HEK293 (cell line): ENCODE measurements at regions of chr16 and their contacts with region 1.

Region 1: DNA sequence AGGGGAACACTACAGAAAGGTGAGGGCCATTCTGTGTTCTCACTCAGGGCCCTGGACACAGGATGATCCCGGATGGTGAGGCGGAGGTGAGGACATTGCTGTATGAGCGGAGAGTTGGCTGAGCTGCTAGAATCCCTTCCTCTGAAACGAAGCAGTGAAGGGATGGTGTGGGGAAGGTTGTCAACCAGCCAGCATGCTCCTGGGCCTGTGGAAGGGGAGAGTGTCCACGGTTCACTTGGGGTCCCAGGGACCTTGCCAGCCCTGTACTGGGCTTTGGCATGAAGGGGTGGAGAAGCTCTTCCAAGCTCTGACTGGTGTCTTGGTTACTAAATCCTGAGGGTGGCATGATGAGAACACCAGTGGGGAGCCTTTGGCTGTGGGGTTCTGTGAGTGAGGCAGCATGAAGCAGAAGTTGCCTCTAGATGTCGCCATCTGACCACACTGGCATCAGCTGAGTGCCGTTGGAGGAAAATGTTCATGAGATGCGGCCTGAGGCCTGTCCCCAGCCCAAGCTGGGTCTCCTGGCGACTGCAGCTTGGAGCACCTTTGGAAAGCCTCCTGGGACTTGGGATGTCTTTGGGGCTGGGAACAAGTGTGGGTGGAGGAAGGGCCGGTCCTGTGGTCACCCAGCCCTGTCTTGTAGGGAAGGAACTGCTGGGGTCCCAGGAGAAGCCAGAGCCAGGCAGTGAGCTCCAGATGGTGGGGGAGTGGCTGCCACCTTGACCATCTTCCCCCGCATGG is 14.8 kb downstream of the PDP2 start:
- H3K4me3 ChIP-seq: no peak overlapping the region
- H3K27ac ChIP-seq: no peak overlapping the region
- H3K4me1 ChIP-seq: peaks cover 6% of the 10 kb centered on the region; the same call in 1 of the 2 replicates
- CTCF ChIP-seq: peak; percentile 97

Region 2: DNA sequence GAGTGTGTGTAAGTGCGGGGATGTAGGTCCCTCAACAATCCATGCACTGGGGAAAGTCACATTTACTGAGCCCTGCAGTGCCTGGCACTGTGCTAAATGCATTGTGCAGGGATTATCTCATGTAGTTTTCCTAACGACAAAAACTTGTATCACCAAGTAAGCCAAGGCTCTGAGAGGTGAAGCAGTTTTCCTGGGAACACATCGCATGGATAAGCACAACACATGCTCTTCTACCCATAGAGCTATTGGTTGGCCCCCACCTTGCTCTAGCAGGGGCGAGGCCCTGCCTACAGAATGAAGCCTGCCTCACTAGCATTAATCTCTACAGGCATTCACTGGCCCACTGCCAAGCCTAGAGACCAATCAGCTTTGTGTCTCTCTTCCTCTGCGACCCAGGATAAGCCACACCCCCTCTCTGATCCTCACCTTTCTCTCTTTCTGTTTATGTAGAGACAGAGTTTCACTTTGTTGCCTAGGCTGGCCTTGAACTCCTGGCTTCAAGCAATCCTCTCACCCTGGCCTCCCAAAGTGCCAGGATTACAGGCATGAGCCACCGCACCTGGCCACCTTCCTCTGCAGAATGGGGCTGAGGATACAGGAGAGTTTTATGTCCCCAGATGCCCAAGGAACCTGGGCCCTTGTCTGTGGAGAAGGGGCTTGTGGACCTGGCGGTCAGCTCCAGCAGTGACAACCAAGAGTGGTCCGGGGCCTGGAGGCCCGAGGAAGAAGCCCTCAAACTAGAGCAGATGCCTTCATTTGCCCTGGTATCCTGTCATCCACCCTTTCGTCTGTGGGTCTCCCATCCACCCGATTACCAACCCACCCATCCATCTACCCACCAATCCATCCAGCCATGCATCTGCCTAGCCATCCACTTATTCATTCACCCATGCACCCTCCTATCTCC is 10.8 kb after region 1 on chr16:
- CTCF ChIA-PET with region 1: interaction called, 29 read pairs
- POLR2A ChIA-PET with region 1: interaction called, 3 read pairs
- H3K4me3 ChIP-seq: no peak overlapping the region
- H3K27ac ChIP-seq: peak overlapping the region; percentile 69
- H3K4me1 ChIP-seq: peaks cover 9% of the 10 kb centered on the region
- CTCF ChIP-seq: no peak

Region 3: DNA sequence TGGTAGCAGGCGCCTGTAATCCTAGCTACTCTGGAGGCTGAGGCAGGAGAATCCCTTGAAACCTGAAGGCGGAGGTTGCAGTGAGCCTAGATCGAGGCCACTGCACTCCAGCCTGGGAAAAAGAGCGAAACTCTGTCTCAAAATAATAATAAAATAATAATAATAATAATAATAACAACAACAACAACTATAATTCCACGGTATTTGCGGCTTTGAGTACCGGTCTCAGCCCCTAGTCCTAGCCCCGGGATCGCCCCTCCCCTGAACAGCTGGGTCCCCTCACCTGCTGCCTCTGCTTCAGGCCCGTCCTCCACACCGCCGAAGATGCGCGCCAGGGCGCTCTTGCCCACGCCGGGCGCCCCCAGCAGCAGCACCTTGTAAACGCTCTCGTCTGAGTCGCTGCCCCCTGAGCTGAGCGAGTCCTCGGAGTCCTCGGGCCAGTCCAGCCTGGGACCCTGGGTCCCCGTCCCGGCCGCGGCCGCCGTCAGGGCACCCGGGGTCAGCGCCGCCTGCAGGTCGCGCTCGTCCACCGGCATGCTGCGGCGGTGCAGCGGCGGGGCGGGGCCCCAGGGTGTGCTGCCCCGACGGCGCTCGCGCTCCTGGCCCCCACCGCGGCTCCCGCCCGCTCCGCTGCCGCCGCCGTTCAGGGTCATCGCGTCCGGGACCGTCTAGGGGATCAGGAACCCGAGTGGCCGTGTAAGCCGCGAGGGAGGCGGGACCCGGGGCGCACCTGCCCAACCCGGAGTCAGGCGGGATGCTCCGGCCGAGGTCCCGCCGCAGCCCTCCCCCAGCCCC is 29.6 kb after region 1 on chr16:
- CTCF ChIA-PET with region 1: interaction called, 268 read pairs
- POLR2A ChIA-PET with region 1: interaction called, 11 read pairs
- H3K4me3 ChIP-seq: peak overlapping the region; percentile 5; the same call in 1 of the 2 replicates
- H3K27ac ChIP-seq: no peak overlapping the region
- H3K4me1 ChIP-seq: no peaks in the 10 kb centered on the region; the same call in 1 of the 2 replicates
- CTCF ChIP-seq: no peak

Region 4: DNA sequence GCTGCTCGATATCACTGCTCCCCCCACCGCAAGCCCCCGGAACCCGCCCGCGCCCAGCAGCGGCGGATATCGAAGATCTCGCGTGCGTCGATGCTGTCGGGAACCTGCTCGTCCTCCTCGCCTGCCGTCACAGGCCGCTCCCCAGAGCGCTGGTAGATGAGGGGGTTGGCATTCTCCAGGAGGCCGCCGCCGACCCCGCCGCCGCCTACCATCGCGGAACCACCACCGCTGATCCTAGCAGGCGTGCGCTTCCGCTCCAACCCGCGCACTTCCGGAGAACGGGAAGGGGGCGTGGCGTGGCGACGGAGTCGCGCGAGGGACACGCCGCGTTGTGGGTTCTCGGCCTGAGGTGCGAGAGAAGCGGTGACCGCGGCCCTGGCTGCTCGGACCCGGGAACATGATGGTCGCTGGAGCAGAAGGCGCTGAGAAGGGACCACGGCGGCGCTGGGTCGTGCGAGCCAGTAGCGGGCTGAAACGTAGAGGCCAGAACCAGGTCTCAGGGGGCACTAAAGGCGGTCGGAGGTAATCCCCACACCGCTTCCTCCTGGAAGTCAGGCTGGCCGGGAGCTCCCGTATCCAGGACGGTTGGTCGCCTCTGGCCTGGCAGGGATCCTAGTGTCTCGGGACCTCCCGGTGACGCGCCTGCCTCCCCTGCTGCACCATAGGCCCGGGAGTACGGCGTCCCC is 39.2 kb after region 1 on chr16 and contains the start of gene CIAO2B:
- CTCF ChIA-PET with region 1: interaction called, 268 read pairs
- POLR2A ChIA-PET with region 1: interaction called, 5 read pairs
- H3K4me3 ChIP-seq: peak within 1 kb of the TSS; percentile 83
- H3K27ac ChIP-seq: peak within 1 kb of the TSS; percentile 72
- H3K4me1 ChIP-seq: peaks cover 2% of the 10 kb centered on the region; the same call in 1 of the 2 replicates
- CTCF ChIP-seq: no peak

Region 5: GRCh38 chr16:66954097-66954659 is 59.1 kb after region 1 on chr16:
- CTCF ChIA-PET with region 1: interaction called, 13 read pairs
- POLR2A ChIA-PET with region 1: no interaction called
- H3K4me3 ChIP-seq: no peak overlapping the region
- H3K27ac ChIP-seq: no peak overlapping the region
- H3K4me1 ChIP-seq: no peaks in the 10 kb centered on the region
- CTCF ChIP-seq: peak; percentile 56; the same call in 1 of the 2 replicates